Aorta (tissue), 5 donors: ENCODE measurements at regions of chr12 and their contacts with region 1.

Region 1: GRCh38 chr12:86985298-86985697 is 729.1 kb upstream of the MGAT4C start:
- DNase-seq: no peak
- ATAC-seq: no peak
- H3K4me3 ChIP-seq: no peak overlapping the region
- H3K27ac ChIP-seq: no peak overlapping the region
- H3K4me1 ChIP-seq: no peaks in the 10 kb centered on the region
- H3K27me3 ChIP-seq: no peaks in the 10 kb centered on the region

Region 2: GRCh38 chr12:86228656-86229055 is 756.6 kb before region 1 on chr12:
- intact Hi-C with region 1: loop called in 1 of 2 experiments (anchors 5 kb)
- DNase-seq: no peak
- ATAC-seq: no peak
- H3K4me3 ChIP-seq: no peak overlapping the region
- H3K27ac ChIP-seq: no peak overlapping the region
- H3K4me1 ChIP-seq: no peaks in the 10 kb centered on the region
- H3K27me3 ChIP-seq: no peaks in the 10 kb centered on the region

Region 3: DNA sequence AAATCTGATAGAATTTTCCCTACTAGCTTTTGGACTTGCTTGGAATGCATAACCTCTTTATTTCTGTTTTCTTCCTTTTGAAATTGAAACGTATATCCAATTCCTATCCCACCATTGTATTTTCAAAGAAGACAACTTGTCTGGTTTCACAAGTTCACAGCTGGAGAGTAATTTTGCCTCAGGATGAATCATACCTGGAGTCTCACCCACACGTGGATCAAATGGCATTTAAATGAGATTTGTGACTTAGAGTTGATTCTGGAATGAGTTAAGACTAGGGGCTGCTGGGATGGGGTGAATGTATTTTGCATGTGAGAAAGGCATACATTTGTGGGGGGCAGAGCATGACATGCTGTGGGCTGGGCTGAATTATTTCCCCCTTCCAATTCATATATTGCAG is 212.6 kb before region 1 on chr12:
- intact Hi-C with region 1: no loop called
- DNase-seq: no peak
- ATAC-seq: no peak
- H3K4me3 ChIP-seq: no peak overlapping the region
- H3K27ac ChIP-seq: no peak overlapping the region
- H3K4me1 ChIP-seq: no peaks in the 10 kb centered on the region
- H3K27me3 ChIP-seq: no peaks in the 10 kb centered on the region

Region 4: DNA sequence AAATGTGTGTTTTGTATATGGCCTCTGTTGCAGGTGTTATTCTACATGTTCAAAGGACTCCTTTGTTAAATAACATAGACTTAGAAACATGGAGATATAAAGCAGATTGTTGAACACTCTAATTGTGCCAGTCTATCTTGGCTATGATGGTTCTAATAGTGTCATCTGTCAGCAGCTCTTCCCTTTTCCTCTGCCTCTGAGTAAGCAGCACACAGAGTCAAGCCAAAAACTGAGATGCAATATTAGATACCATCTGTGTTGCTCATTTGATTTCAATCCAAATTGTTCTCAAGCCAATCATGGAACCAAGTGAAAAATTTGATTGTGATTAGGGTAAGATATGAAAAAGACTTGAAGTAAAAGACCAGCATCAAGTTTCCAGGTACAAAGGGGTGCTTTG is 142.0 kb after region 1 on chr12:
- intact Hi-C with region 1: no loop called
- DNase-seq: no peak
- ATAC-seq: no peak
- H3K4me3 ChIP-seq: no peak overlapping the region
- H3K27ac ChIP-seq: no peak overlapping the region
- H3K4me1 ChIP-seq: no peaks in the 10 kb centered on the region
- H3K27me3 ChIP-seq: no peaks in the 10 kb centered on the region